Motor neuron (in vitro differentiated cells): ENCODE measurements at regions of chr19 and their contacts with region 1.

Region 1: GRCh38 chr19:17025991-17026658 is 485 bp downstream of the CPAMD8 start:
- ATAC-seq: peak; percentile 14 to 68 (median 50)
- H3K4me3 ChIP-seq: peak overlapping the region; percentile 29 to 36 (median 34)
- H3K27ac ChIP-seq: no peak overlapping the region
- H3K4me1 ChIP-seq: peaks cover 0 to 5% of the 10 kb centered on the region in 2 donors

Region 2: DNA sequence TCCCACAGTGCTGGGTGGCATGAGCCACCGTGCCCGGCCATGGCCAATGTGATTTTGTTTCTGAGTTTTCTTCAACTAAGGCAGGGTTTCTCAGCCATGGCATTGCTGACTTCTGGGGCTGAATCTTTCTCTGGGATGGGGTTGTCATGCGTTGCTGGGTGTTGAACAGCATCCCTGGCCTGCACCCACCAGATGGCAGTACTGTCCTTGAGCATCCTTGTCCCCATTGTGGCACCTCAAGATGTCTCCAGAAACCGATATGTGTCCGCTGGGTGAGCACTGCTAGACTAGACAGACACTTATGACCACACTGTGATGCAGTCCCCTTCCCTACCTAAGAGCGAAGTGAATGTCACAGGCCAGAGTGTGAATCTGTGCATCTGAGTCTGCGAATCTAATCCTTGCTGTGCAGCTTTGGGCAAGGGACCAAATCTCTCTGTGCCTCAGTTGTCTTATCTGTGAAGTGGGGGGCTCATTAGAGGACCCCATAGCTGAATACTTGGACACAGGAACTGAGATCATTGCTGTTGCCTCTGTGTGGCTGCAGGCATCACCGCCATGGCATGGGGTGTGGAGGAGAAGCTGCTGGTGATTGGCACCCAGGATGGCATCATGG is 247.2 kb before region 1 on chr19:
- in situ Hi-C with region 1: loop called in 1 of 9 experiments (anchors 25 kb)
- ATAC-seq: peak in 3 of 8 experiments; percentile 79 to 95 (median 91)
- H3K4me3 ChIP-seq: no peak overlapping the region
- H3K27ac ChIP-seq: no peak overlapping the region
- H3K4me1 ChIP-seq: no peaks in the 10 kb centered on the region